ENCODE measurements at regions of chr6 and their contacts with region 1.

Region 1: GRCh38 chr6:123636782-123637181 is at the start of gene TRDN:
- DNase-seq: no peak
- total RNA-seq, gene TRDN: 490 TPM

Region 2: DNA sequence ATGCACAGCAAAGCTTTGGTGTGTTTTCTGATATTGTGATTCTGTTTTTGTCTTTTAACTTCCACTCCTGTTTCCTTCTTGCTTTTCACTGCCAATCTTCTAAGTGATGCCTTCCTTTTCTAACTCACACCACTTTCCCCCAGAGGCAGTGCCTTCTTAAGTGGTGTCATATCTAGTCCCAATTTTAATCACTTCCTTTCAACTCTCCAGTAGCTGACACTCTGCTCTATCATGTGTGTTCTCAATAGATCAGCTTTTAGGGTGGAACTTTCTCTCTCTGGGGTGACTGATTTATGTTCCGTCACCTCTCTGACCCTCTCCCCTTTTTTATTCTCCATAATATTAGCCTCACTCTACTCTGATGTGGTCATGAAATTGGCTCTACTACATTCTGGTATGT is 460.1 kb before region 1 on chr6:
- intact Hi-C with region 1: no loop called
- DNase-seq: no peak

Region 3: DNA sequence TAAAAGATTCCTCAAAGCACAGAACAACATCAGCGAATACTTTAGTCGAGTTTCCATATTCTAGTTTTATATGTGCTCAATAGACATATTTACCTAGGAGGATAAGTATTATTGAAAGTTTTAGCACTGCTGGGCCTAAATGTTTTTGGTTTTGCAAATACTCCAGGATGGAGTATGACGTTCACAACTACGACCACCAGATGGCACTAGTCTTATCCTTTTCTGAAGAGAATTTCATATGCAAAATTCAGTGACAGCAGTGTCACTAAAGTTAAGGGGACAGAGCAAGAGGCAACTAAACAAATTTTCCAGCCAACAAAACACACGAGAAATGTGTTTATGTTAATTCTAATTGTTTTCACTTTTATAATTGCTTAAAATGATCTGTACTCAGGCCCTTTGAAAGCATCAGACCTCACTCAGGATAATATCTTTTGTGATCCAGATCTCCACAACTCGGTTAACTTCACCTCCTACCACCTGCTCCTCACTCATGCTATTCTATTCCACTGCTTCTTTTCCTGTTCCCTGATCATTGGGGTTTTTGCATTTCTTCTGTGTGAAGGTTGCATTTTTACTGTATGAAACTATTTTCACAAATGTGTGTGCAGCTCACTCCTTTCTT is 220.8 kb before region 1 on chr6:
- intact Hi-C with region 1: loop called (anchors 5 kb)
- DNase-seq: no peak

Region 4: GRCh38 chr6:123439371-123439770 is 197.4 kb before region 1 on chr6:
- intact Hi-C with region 1: loop called (anchors 5 kb)
- DNase-seq: no peak

Region 5: GRCh38 chr6:123519191-123519510 is 117.6 kb before region 1 on chr6:
- intact Hi-C with region 1: loop called (anchors 5 kb)
- DNase-seq: peak; percentile 91

Region 6: GRCh38 chr6:123529843-123530242 is 106.9 kb before region 1 on chr6:
- intact Hi-C with region 1: loop called (anchors 5 kb)
- DNase-seq: no peak

Region 7: DNA sequence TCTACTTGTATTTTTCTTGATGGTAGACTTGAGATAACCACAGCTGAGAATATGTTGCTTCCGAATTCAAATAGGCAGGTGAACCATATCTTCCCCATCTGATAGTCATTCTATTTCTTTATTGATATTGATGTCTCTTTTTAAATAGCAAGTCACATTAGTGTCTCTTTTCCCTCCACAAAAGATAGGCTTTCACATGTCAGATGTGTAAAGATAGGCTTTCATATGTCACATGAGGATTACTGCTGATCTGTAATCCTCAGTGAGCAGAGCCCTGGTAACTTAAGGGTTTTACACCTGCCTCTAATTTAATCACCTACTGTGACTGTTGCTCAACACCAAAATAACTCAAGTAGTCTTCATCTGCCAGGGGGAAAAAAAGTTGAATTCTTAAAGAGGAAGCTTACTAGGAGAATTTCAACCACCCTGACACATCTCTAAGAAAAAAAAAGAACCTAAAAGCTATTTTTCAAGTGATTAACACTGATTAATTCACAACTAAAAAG is 45.2 kb after region 1 on chr6:
- intact Hi-C with region 1: no loop called
- DNase-seq: no peak

Measured in cardiac septum (tissue), 1 donor.